ENCODE measurements at regions of chr5 and their contacts with region 1.

Region 1: DNA sequence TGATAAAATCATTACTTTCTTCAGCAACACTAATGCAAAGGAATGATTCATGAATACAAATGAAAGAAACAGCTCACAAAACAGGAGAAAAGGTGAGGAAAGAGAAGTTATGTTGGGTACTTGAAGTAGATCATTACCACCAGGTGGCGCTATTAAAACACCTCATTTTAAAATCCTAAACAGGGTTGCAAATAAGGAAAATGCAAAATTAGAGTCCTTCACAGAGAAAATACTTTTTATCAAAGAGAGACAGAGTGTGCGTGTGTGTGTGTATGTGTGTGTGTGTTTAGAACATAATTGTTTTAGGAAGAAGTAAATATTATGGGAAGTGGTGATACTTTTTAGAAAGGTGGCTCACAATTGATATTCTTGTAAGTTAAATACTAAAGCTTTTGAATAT is 49.5 kb upstream of the CD180 start:
- DNase-seq: peak; percentile 68
- H3K4me3 ChIP-seq: no peak overlapping the region
- H3K27ac ChIP-seq: no peak overlapping the region
- H3K27me3 ChIP-seq: no peaks in the 10 kb centered on the region
- CTCF ChIP-seq: peak; percentile 64

Region 2: GRCh38 chr5:67234671-67235176 is 11.4 kb before region 1 on chr5:
- CTCF ChIA-PET with region 1: interaction called, 12 read pairs
- POLR2A ChIA-PET with region 1: no interaction called
- DNase-seq: peak; percentile 37
- H3K4me3 ChIP-seq: peak overlapping the region; percentile 51
- H3K27ac ChIP-seq: peak overlapping the region; percentile 50
- H3K27me3 ChIP-seq: no peaks in the 10 kb centered on the region
- CTCF ChIP-seq: no peak

Region 3: GRCh38 chr5:67267347-67268216 is 21.5 kb after region 1 on chr5:
- CTCF ChIA-PET with region 1: interaction called, 20 read pairs
- POLR2A ChIA-PET with region 1: no interaction called
- DNase-seq: no peak
- H3K4me3 ChIP-seq: peak overlapping the region; percentile 8; the same call in 1 of the 2 replicates
- H3K27ac ChIP-seq: peak overlapping the region; percentile 86
- H3K27me3 ChIP-seq: no peaks in the 10 kb centered on the region
- CTCF ChIP-seq: no peak

Region 4: GRCh38 chr5:68252673-68253623 is 1006.8 kb after region 1 on chr5:
- CTCF ChIA-PET with region 1: interaction called, 102 read pairs
- POLR2A ChIA-PET with region 1: no interaction called
- DNase-seq: peak; percentile 42
- H3K4me3 ChIP-seq: no peak overlapping the region
- H3K27ac ChIP-seq: no peak overlapping the region
- H3K27me3 ChIP-seq: no peaks in the 10 kb centered on the region
- CTCF ChIP-seq: peak; percentile 93

Region 5: DNA sequence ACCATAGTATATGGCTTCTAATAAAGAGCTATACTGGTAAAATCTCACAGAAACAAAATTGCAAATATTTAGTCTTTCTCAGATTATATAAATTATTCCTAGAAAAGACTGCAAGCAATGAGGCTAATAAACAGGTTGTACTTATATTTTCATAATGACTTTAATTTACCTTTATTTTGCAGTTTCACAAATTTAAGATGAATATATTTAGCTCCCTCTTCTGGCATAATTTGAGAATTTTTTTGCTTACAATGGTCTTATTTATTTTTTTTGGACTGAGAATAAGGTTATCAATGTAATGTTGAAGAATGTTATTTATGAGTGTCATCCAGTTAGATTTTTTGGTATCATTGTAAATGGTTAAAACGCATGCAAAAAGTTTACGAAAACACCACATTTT is 1026.2 kb after region 1 on chr5:
- CTCF ChIA-PET with region 1: interaction called, 20 read pairs
- POLR2A ChIA-PET with region 1: no interaction called
- DNase-seq: no peak
- H3K4me3 ChIP-seq: no peak overlapping the region
- H3K27ac ChIP-seq: no peak overlapping the region
- H3K27me3 ChIP-seq: no peaks in the 10 kb centered on the region
- CTCF ChIP-seq: peak; percentile 40; the same call in 1 of the 2 replicates

Measured in AG04450 (cell line).